Heart right ventricle (tissue), 16 donors: ENCODE measurements at regions of chr4 and their contacts with region 1.

Region 1: DNA sequence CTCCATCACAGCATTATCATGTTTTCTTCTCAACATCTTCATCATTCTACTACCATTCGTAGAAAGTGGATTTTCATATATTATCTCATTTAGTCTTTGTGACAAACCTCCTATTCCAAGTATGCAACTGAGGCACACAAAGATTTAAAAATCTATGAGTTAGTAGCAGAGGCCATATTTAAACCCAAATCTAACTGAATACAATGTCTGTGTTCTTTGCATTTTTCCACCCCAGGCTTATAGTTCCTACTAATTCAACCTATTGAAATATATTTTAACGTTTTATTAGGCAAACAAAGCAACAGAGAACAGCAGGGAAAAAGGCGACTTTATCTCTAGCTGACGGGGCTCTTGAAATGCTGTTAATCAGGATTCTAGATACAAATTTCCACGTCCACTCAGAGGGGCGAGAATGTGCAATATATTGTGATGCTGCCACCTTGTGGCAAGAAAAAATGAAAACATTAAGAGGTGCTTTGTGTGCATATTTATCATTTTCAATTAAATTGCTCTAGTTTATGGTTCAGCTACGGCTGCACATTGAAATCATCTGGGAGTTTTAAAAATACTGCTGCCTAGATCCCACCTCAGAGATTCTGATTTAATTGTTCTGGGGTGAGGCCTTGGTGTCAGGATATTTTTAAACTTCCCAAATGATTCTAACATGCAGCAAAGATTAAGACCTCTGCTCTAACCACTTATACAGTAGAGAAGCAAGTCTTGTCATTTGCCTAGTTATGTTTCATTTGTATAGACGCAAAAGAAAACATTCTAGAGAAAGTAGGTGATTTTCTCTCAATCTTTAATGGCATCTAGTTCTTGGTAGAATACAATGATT is 315.9 kb downstream of the MAPK10 start:
- DNase-seq: peak in 1 of 2 donors; percentile 46
- ATAC-seq: peak in 5 of 8 donors; percentile 53 to 79 (median 55)
- H3K4me3 ChIP-seq: no peak overlapping the region
- H3K27ac ChIP-seq: no peak overlapping the region
- H3K4me1 ChIP-seq: peaks cover 0 to 7% (median 0%) of the 10 kb centered on the region in 9 donors
- H3K27me3 ChIP-seq: no peaks in the 10 kb centered on the region
- CTCF ChIP-seq: peak; percentile 55 to 83 (median 70)

Region 2: GRCh38 chr4:85147439-85148076 is 896.4 kb before region 1 on chr4:
- intact Hi-C with region 1: loop called in 7 of 10 experiments (anchors 5 to 10 kb)
- DNase-seq: peak; percentile 27 to 65
- ATAC-seq: peak in 7 of 8 donors; percentile 54 to 86 (median 82)
- H3K4me3 ChIP-seq: peak overlapping the region in 7 of 10 donors; percentile 18 to 46 (median 28)
- H3K27ac ChIP-seq: peak overlapping the region in 3 of 10 donors; percentile 25 to 57 (median 27)
- H3K4me1 ChIP-seq: peaks cover 0 to 22% (median 11%) of the 10 kb centered on the region in 9 donors
- H3K27me3 ChIP-seq: no peaks in the 10 kb centered on the region
- CTCF ChIP-seq: peak; percentile 38 to 81 (median 72)

Region 3: GRCh38 chr4:85790582-85790981 is 253.4 kb before region 1 on chr4:
- intact Hi-C with region 1: loop called in 4 of 10 experiments (anchors 5 to 10 kb)
- DNase-seq: no peak
- ATAC-seq: no peak
- H3K4me3 ChIP-seq: no peak overlapping the region
- H3K27ac ChIP-seq: peak overlapping the region in 1 of 10 donors; percentile 32
- H3K4me1 ChIP-seq: peaks cover 8 to 53% (median 22%) of the 10 kb centered on the region in 9 donors
- H3K27me3 ChIP-seq: no peaks in the 10 kb centered on the region
- CTCF ChIP-seq: no peak

Region 4: DNA sequence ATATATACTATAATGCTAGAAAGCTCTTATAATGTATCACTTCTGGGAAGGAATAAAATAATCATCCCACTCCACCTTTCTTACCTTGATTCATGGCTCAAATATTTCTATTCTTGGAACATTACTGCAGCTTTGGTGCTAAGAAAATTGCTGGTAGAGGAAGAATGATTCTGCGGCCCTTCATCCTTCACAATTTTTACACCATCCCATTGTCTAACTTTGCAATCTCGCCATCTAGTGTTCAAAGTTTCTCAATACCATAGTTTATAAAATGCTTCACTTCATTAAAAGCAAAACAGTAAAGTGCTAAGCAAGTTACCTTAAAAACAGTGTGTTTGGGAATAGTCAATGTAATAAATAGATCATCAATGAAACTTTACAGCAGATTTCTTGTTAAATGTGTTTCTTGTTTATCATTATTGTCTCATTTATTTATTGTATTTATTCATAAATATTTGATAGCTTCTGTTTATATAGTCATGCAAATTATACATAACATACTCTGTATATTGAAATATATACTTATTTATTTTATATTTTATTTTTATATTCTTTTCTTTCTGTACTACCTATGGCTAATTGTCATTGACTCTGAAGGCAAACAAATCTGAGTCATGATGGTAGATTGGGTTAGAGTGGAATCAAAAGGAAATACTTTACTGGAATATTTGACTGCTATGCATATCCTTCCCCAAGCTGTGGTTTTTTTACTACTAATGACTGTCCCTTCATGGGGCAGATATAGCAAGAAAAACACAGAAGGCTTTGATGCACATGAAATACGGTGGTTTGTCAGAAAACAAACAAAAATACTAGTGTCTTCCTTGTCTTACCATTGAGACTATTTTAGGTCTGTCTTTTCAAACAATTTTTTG is 74.8 kb before region 1 on chr4:
- intact Hi-C with region 1: loop called in 7 of 10 experiments (anchors 5 to 10 kb)
- DNase-seq: no peak
- ATAC-seq: peak in 6 of 8 donors; percentile 55 to 68 (median 66)
- H3K4me3 ChIP-seq: no peak overlapping the region
- H3K27ac ChIP-seq: no peak overlapping the region
- H3K4me1 ChIP-seq: peaks cover 0 to 50% (median 26%) of the 10 kb centered on the region in 9 donors
- H3K27me3 ChIP-seq: no peaks in the 10 kb centered on the region
- CTCF ChIP-seq: peak; percentile 33 to 79 (median 66)

Region 5: GRCh38 chr4:86181585-86181984 is 137.6 kb after region 1 on chr4:
- intact Hi-C with region 1: no loop called
- DNase-seq: no peak
- ATAC-seq: no peak
- H3K4me3 ChIP-seq: no peak overlapping the region
- H3K27ac ChIP-seq: no peak overlapping the region
- H3K4me1 ChIP-seq: no peaks in the 10 kb centered on the region
- H3K27me3 ChIP-seq: no peaks in the 10 kb centered on the region
- CTCF ChIP-seq: no peak